Calu3 (cell line): ENCODE measurements at regions of chr15 and their contacts with region 1.

Region 1: DNA sequence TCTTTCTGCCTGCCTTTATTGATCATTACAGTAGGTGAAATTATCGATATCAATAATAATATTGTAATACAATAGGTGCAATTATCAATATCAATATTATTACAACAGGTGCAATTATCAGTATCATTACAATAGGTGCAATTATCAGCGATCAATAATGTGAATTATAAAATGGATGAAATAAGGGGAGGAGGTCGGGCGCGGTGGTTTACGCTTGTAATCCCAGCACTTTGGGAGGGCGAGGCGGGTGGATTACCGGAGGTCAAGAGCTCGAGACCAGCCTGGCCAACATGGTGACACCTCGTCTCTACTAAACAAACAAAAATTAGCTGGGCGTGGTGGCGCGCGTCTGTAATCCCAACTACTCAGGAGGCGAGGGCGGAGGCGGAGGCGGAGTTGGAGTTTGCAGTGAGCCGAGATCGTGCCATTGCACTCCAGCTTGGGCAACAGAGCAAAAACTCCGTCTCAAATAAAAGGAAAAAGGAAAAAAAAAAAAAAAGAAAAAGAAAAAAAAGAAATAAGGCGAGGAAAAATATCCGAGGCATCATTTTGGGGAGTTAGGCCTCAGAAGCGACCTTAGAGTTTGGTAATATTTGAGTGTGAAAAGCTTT is 611 bp upstream of the BNIP2 start:
- DNase-seq: peak; percentile 85
- H3K4me3 Mint-ChIP-seq: peak overlapping the region; percentile 77
- H3K27ac Mint-ChIP-seq: peak overlapping the region; percentile 29
- H3K4me1 Mint-ChIP-seq: peaks cover 40% of the 10 kb centered on the region
- H3K27me3 Mint-ChIP-seq: no peaks in the 10 kb centered on the region
- CTCF ChIP-seq: no peak

Region 2: GRCh38 chr15:59668556-59668955 is 21.2 kb before region 1 on chr15:
- CTCF ChIA-PET with region 1: no interaction called
- intact Hi-C with region 1: no loop called
- DNase-seq: no peak
- H3K4me3 Mint-ChIP-seq: no peak overlapping the region
- H3K27ac Mint-ChIP-seq: no peak overlapping the region
- H3K4me1 Mint-ChIP-seq: no peaks in the 10 kb centered on the region
- H3K27me3 Mint-ChIP-seq: no peaks in the 10 kb centered on the region
- CTCF ChIP-seq: no peak

Region 3: GRCh38 chr15:59725172-59725486 is 35.4 kb after region 1 on chr15:
- CTCF ChIA-PET with region 1: interaction called, 6 read pairs
- intact Hi-C with region 1: loop called (anchors 1 kb)
- DNase-seq: no peak
- H3K4me3 Mint-ChIP-seq: no peak overlapping the region
- H3K27ac Mint-ChIP-seq: no peak overlapping the region
- H3K4me1 Mint-ChIP-seq: no peaks in the 10 kb centered on the region
- H3K27me3 Mint-ChIP-seq: peaks cover 34% of the 10 kb centered on the region
- CTCF ChIP-seq: peak; percentile 1

Region 4: GRCh38 chr15:59741274-59741906 is 51.7 kb after region 1 on chr15:
- CTCF ChIA-PET with region 1: no interaction called
- intact Hi-C with region 1: loop called (anchors 2 kb)
- DNase-seq: peak; percentile 23
- H3K4me3 Mint-ChIP-seq: no peak overlapping the region
- H3K27ac Mint-ChIP-seq: no peak overlapping the region
- H3K4me1 Mint-ChIP-seq: peaks cover 7% of the 10 kb centered on the region
- H3K27me3 Mint-ChIP-seq: peaks cover 86% of the 10 kb centered on the region
- CTCF ChIP-seq: no peak

Region 5: DNA sequence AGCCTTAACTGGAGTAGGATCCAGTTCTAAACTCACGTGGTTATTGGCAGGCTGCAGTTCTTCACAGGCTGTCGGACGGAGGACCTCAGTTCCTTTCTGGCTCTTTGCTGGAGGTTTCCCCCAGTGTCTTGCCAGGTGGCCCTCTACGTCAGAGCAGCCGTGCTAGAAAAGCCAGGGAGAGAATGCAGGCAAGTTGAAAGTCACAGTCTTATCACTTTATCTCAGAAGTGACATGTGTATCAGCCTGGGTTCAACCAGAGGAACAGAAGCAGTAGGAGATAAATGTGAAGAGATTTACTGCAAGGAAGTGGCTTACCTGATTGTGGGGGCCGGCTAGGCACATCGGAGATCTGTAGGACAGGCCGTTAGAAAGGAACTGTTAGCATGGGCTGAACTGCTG is 124.7 kb after region 1 on chr15:
- CTCF ChIA-PET with region 1: no interaction called
- intact Hi-C with region 1: no loop called
- DNase-seq: no peak
- H3K4me3 Mint-ChIP-seq: no peak overlapping the region
- H3K27ac Mint-ChIP-seq: no peak overlapping the region
- H3K4me1 Mint-ChIP-seq: no peaks in the 10 kb centered on the region
- H3K27me3 Mint-ChIP-seq: peaks cover 64% of the 10 kb centered on the region
- CTCF ChIP-seq: no peak

Region 6: GRCh38 chr15:60128000-60128376 is 438.3 kb after region 1 on chr15:
- CTCF ChIA-PET with region 1: interaction called, 4 read pairs
- intact Hi-C with region 1: loop called (anchors 2 kb)
- DNase-seq: no peak
- H3K4me3 Mint-ChIP-seq: peak overlapping the region; percentile 85
- H3K27ac Mint-ChIP-seq: peak overlapping the region; percentile 73
- H3K4me1 Mint-ChIP-seq: peaks cover 24% of the 10 kb centered on the region
- H3K27me3 Mint-ChIP-seq: peaks cover 15% of the 10 kb centered on the region
- CTCF ChIP-seq: no peak